ENCODE measurements at regions of chr4 and their contacts with region 1.

Region 1: DNA sequence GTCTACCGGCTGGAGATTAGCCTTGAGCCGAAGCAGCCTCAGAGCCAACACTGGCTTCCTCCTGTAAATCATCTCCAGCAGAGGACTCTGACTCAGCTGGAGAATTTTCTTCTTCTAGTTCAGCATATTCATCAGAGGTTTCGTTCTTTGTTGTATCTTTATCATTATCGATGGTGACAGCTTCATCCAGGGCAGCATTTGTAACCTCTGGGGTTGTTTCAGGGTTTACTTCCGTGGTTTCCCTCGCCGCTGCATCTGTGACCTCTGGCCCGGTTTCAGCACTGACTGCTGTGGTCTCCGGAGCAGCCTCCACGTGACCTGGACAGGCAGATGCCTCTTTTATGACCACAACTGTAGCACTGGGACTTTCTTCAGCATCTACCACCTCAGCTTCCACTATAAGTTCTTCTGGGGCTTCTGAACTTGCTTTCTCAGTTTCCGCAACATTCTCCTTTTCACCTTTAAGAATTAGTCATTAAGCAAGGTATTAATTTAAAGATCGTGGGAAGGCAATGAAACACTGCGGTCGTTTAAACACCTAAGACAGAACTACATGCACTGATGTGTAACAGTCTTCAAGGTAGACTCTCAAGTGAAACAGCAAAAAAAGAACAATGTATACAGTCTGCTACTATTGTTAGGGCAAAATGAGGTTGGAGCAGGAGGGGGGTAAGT is 13.3 kb downstream of the MGARP start:
- DNase-seq: peak; percentile 94
- H3K4me3 Mint-ChIP-seq: peak overlapping the region; percentile 28
- H3K27ac Mint-ChIP-seq: peak overlapping the region; percentile 84
- H3K4me1 Mint-ChIP-seq: peaks cover 19% of the 10 kb centered on the region
- H3K27me3 Mint-ChIP-seq: peaks cover 1% of the 10 kb centered on the region

Region 2: DNA sequence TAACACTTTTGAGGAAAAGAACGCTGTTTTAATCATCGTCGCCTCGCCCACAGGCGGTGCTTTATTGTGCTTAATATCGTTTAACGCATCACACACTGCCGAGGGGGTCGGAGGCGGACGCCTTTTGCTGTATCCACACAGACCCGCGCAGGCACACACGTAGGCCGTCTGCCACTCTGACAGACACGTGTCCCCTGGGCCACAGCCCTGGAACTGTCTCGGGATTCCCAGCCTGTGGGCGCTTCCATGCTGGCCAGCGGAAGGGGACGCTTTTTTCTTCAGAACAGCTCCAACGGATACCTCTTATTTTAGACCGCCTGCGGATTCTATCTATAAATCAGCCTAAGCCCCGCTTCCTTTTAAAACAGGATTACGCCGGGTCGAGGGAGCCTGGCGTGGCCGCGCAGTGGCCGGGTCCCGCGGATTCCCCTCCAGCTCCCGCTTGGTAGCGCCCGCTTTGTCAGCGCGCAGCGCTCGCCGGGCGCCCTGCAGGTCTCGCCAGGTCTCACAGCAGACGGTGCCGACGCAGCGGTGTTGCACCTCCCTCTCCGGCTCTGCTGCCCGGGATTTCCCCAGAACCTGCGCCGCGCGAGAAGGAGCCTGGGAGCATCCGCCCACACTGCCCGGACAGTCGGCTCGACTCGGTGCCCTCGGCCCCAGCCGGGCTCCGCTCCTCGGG is 251.3 kb before region 1 on chr4 and contains the start of gene NOCT:
- CTCF ChIA-PET with region 1: no interaction called
- POLR2A ChIA-PET with region 1: interaction called, 6 read pairs
- intact Hi-C with region 1: loop called (anchors 1 kb)
- DNase-seq: peak; percentile 97
- H3K4me3 Mint-ChIP-seq: peak within 1 kb of the TSS; percentile 89
- H3K27ac Mint-ChIP-seq: peak within 1 kb of the TSS; percentile 94
- H3K4me1 Mint-ChIP-seq: peaks cover 45% of the 10 kb centered on the region
- H3K27me3 Mint-ChIP-seq: no peaks in the 10 kb centered on the region
- total RNA-seq, gene NOCT: 12.2 to 14.3 TPM

Region 3: GRCh38 chr4:139229534-139230039 is 37.1 kb before region 1 on chr4:
- CTCF ChIA-PET with region 1: interaction called, 3 read pairs
- POLR2A ChIA-PET with region 1: no interaction called
- intact Hi-C with region 1: loop called (anchors 2 kb)
- DNase-seq: no peak
- H3K4me3 Mint-ChIP-seq: no peak overlapping the region
- H3K27ac Mint-ChIP-seq: no peak overlapping the region
- H3K4me1 Mint-ChIP-seq: no peaks in the 10 kb centered on the region
- H3K27me3 Mint-ChIP-seq: no peaks in the 10 kb centered on the region

Region 4: DNA sequence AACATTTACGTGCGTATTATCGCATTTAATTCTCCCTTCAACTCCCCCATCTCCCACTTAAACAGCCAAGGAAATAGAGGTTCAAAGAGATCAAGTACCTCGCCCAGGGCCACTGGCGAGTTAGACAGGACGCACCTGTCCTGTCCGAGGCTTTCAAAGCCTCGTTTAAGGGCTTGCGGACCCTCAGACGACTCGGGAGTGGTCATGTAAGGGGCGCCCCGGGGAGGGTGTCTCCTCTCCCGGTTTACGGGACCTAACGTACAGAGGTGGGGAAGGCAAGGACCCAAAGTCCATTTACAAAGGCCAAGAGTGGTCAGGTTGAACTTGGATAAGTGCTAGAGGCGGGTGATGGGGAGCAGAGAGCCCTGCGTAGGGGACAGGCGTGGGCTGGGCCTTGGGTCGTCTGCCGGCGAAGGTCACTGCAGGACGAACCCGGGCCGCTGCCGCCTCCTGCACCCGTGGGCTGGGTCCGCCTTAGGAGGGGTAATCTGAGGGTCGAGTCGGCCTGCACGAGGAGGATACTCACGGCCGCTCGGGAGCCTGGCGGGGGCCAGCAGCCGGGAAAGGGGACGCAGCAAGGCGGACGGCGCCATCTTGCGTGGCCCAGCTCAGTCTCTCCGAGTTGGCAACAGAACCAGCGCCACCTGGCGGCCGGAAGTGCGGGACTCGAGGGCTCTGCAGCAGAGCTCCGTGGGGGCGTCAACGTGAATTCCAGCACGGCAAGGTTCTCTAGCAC is 28.7 kb after region 1 on chr4:
- CTCF ChIA-PET with region 1: interaction called, 39 read pairs
- POLR2A ChIA-PET with region 1: interaction called, 19 read pairs
- intact Hi-C with region 1: loop called (anchors 1 kb)
- DNase-seq: peak; percentile 97
- H3K4me3 Mint-ChIP-seq: peak overlapping the region; percentile 93
- H3K27ac Mint-ChIP-seq: peak overlapping the region; percentile 94
- H3K4me1 Mint-ChIP-seq: peaks cover 29% of the 10 kb centered on the region
- H3K27me3 Mint-ChIP-seq: no peaks in the 10 kb centered on the region

Region 5: GRCh38 chr4:139582044-139582443 is 315.3 kb after region 1 on chr4:
- CTCF ChIA-PET with region 1: no interaction called
- POLR2A ChIA-PET with region 1: no interaction called
- intact Hi-C with region 1: no loop called
- DNase-seq: no peak
- H3K4me3 Mint-ChIP-seq: no peak overlapping the region
- H3K27ac Mint-ChIP-seq: no peak overlapping the region
- H3K4me1 Mint-ChIP-seq: no peaks in the 10 kb centered on the region
- H3K27me3 Mint-ChIP-seq: peaks cover 17% of the 10 kb centered on the region

Region 6: DNA sequence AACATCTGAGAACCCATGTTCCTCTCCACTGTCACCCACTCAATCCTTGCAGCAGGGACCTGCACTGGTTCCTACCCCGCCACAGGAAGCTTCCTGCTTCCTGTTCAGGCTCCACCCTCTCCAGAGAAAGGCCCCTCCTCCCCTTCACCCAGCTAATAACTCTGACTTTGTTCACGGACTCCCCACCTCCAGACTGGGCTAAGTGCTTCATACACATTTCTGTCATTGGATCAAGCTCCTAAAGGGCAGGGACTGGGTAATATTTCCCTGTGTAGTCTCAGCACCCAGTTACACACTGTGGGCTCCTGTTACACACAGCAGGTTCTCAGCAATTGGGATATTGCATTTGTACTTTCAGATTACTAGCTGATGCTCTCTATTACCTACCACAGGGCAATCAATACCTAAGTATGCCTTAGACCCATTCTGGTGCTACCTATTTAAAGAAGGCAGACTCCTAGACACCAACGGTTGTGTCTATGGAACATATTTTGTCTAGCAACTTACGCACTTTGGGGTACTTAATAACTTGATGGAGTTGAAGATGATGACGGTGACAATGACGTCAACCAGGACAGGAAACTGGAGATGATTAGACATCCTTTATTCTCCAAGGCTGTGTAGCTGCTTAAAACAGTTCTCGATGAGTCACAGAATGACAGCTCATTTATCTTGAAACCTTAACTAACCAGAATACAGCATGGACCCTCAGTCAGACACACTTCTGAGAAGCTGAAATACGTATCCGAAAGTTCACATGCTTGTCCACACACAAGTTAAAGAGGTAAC is 829.2 kb after region 1 on chr4:
- CTCF ChIA-PET with region 1: no interaction called
- POLR2A ChIA-PET with region 1: no interaction called
- intact Hi-C with region 1: loop called (anchors 1 kb)
- DNase-seq: peak; percentile 75
- H3K4me3 Mint-ChIP-seq: peak overlapping the region; percentile 75
- H3K27ac Mint-ChIP-seq: peak overlapping the region; percentile 98
- H3K4me1 Mint-ChIP-seq: peaks cover 71% of the 10 kb centered on the region
- H3K27me3 Mint-ChIP-seq: no peaks in the 10 kb centered on the region